ENCODE measurements at regions of chr20 and their contacts with region 1.

Region 1: DNA sequence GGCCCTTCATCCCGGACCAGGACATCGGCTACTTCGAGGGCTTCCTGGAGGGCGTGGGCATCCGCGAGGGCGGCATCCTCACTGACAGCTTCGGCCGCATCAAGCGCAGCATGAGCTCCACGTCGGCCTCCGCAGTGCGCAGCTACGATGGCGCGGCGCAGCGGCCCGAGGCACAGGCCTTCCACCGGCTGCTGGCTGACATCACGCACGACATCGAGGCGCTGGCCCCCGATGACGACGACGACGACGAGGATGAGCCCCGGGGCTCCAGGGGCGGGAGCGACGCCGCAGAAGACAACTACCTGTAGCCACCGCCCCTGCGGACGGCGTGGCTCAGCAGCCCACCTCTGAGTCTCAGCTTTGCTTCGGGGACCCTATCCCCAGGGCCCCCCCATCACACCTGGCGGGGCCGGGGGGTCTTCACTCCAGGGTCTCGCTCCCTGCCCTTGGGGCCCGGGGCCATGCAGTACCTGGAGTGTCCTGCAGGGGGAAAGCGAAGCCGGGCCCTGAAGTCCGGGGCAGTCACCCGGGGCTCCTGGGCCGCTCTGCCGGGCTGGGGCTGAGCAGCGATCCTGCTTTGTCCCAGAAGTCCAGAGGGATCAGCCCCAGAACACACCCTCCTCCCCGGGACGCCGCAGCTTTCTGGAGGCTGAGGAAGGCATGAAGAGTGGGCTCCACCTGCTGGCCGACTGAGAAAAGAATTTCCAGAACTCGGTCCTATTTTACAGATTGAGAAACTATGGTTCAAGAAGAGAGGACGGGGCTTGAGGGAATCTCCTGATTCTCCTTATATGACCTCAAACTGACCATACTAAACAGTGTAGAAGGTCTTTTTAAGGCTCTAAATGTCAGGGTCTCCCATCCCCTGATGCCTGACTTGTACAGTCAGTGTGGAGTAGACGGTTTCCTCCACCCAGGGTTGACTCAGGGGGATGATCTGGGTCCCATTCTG is 20.8 kb upstream of the HCK start:
- DNase-seq: peak; percentile 74 to 84
- H3K4me3 ChIP-seq: peak overlapping the region in 1 of 2 donors; percentile 38
- H3K27ac ChIP-seq: no peak overlapping the region
- H3K4me1 ChIP-seq: peaks cover 0 to 11% (median 7%) of the 10 kb centered on the region in 4 donors
- H3K27me3 ChIP-seq: peaks cover 0 to 40% of the 10 kb centered on the region in 2 donors
- CTCF ChIP-seq: peak; percentile 71 to 85

Region 2: GRCh38 chr20:31652917-31653396 is 378.3 kb before region 1 on chr20:
- intact Hi-C with region 1: no loop called
- DNase-seq: no peak
- H3K4me3 ChIP-seq: no peak overlapping the region
- H3K27ac ChIP-seq: no peak overlapping the region
- H3K4me1 ChIP-seq: peaks cover 0 to 16% (median 6%) of the 10 kb centered on the region in 4 donors
- H3K27me3 ChIP-seq: no peaks in the 10 kb centered on the region
- CTCF ChIP-seq: no peak

Region 3: GRCh38 chr20:31833130-31833930 is 198.0 kb before region 1 on chr20:
- intact Hi-C with region 1: loop called (anchors 5 kb)
- DNase-seq: peak in 1 of 2 donors; percentile 58
- H3K4me3 ChIP-seq: no peak overlapping the region
- H3K27ac ChIP-seq: no peak overlapping the region
- H3K4me1 ChIP-seq: peaks cover 8 to 41% (median 32%) of the 10 kb centered on the region in 4 donors
- H3K27me3 ChIP-seq: no peaks in the 10 kb centered on the region
- CTCF ChIP-seq: peak; percentile 71 to 83

Region 4: DNA sequence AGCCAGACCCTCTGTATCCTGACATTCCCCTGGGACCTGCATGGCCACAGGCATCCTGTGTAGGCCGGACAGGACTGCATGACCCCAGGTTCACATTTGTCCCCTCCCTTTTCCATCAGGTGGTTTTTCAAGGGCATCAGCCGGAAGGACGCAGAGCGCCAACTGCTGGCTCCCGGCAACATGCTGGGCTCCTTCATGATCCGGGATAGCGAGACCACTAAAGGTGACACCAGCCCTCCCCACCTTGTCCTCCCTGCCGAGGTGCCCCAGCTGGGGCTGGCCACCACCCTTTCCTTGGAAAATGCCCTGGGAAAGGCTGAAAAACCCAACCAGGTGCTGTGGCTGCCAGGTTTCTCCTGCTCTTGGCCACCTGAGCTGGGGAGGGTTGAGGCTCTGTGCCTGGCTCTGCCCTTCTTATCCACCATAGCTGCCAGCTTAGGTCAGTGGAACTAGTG is 48.4 kb after region 1 on chr20:
- intact Hi-C with region 1: no loop called
- DNase-seq: no peak
- H3K4me3 ChIP-seq: no peak overlapping the region
- H3K27ac ChIP-seq: no peak overlapping the region
- H3K4me1 ChIP-seq: no peaks in the 10 kb centered on the region
- H3K27me3 ChIP-seq: peaks cover 0 to 51% of the 10 kb centered on the region in 2 donors
- CTCF ChIP-seq: no peak